Calu3 (cell line): ENCODE measurements at regions of chr10 and their contacts with region 1.

Region 1: GRCh38 chr10:43105102-43105785 is 28.4 kb downstream of the RET start:
- DNase-seq: peak; percentile 81
- H3K4me3 Mint-ChIP-seq: peak overlapping the region; percentile 74
- H3K27ac Mint-ChIP-seq: no peak overlapping the region
- H3K4me1 Mint-ChIP-seq: no peaks in the 10 kb centered on the region
- H3K27me3 Mint-ChIP-seq: peaks cover 37% of the 10 kb centered on the region
- CTCF ChIP-seq: peak; percentile 99

Region 2: GRCh38 chr10:42866115-42866995 is 238.9 kb before region 1 on chr10:
- CTCF ChIA-PET with region 1: interaction called, 5 read pairs
- intact Hi-C with region 1: loop called (anchors 1 kb)
- DNase-seq: peak; percentile 87
- H3K4me3 Mint-ChIP-seq: peak overlapping the region; percentile 35
- H3K27ac Mint-ChIP-seq: no peak overlapping the region
- H3K4me1 Mint-ChIP-seq: peaks cover 15% of the 10 kb centered on the region
- H3K27me3 Mint-ChIP-seq: peaks cover 78% of the 10 kb centered on the region
- CTCF ChIP-seq: peak; percentile 84